ENCODE measurements at regions of chr3 and their contacts with region 1.

Region 1: DNA sequence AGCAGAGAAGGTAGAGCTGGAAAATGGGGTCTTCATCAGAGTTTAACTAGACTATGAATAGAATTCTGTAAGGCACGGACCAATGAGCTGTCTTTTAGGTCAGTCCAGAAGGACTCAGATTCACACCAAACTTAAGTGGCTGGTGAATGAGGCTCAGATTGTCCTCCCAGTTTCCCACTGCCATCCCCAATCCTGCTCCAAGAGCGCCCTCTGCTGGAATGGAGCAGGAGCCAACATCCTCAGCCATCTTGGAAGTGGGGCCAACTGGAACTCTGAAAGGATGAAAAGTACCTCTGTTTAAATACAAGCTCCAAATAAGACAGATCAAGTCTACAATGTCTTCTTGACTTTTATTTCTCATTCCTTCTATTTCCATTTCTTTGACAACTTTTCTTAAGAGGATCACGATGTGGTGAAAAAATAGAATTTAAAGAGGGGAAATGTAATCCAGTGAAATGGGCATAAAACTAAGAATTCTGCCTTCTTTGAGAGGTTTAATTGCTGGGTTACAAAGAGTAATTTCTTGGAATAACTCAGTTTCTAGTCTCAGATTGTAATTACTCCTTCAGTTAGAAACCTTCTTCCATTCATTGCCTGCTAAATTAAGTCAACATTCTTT is 217.1 kb upstream of the TPRG1 start:
- DNase-seq: peak; percentile 79
- ATAC-seq: peak; percentile 81
- H3K4me3 ChIP-seq: no peak overlapping the region
- H3K27ac ChIP-seq: no peak overlapping the region
- H3K4me1 ChIP-seq: peaks cover 17 to 22% of the 10 kb centered on the region in 2 experiments
- H3K27me3 ChIP-seq: no peaks in the 10 kb centered on the region
- CTCF ChIP-seq: peak in 2 of 3 experiments; percentile 88 to 97; a peak in 4 of 6 replicates
- POLR2A ChIP-seq: no peak
- RAD21 ChIP-seq: no peak

Region 2: GRCh38 chr3:187738331-187739093 is 1216.2 kb before region 1 on chr3:
- CTCF ChIA-PET with region 1: interaction called, 260 read pairs
- POLR2A ChIA-PET with region 1: interaction called, 15 read pairs
- RAD21 ChIA-PET with region 1: interaction called, 4 to 14 read pairs
- intact Hi-C with region 1: loop called (anchors 1 kb)
- DNase-seq: peak; percentile 83
- ATAC-seq: peak; percentile 70
- H3K4me3 ChIP-seq: peak overlapping the region; percentile 62 to 85
- H3K27ac ChIP-seq: peak overlapping the region; percentile 44
- H3K4me1 ChIP-seq: peaks cover 28 to 67% of the 10 kb centered on the region in 2 experiments
- H3K27me3 ChIP-seq: no peaks in the 10 kb centered on the region
- CTCF ChIP-seq: peak in 2 of 3 experiments; percentile 76 to 82; a peak in 4 of 6 replicates
- POLR2A ChIP-seq: no peak
- RAD21 ChIP-seq: no peak

Region 3: GRCh38 chr3:188164248-188164687 is 790.4 kb before region 1 on chr3:
- CTCF ChIA-PET with region 1: no interaction called
- POLR2A ChIA-PET with region 1: no interaction called
- RAD21 ChIA-PET with region 1: no interaction called
- intact Hi-C with region 1: loop called (anchors 10 kb)
- DNase-seq: peak; percentile 62
- ATAC-seq: peak; percentile 92
- H3K4me3 ChIP-seq: peak overlapping the region in 1 of 2 experiments; percentile 32; a peak in 2 of 4 replicates
- H3K27ac ChIP-seq: peak overlapping the region; percentile 65; the same call in 1 of the 2 replicates
- H3K4me1 ChIP-seq: peaks cover 26 to 40% of the 10 kb centered on the region in 2 experiments
- H3K27me3 ChIP-seq: no peaks in the 10 kb centered on the region
- CTCF ChIP-seq: no peak
- POLR2A ChIP-seq: no peak
- RAD21 ChIP-seq: peak; percentile 39

Region 4: GRCh38 chr3:188830893-188831292 is 123.8 kb before region 1 on chr3:
- CTCF ChIA-PET with region 1: interaction called, 13 read pairs
- POLR2A ChIA-PET with region 1: no interaction called
- RAD21 ChIA-PET with region 1: no interaction called
- intact Hi-C with region 1: loop called (anchors 2 kb)
- DNase-seq: no peak
- ATAC-seq: peak; percentile 64
- H3K4me3 ChIP-seq: no peak overlapping the region
- H3K27ac ChIP-seq: no peak overlapping the region
- H3K4me1 ChIP-seq: 0 out of 4 replicates have a peak, but pooled peaks cover 0 to 4% of the 10 kb centered on the region in 2 experiments
- H3K27me3 ChIP-seq: no peaks in the 10 kb centered on the region
- CTCF ChIP-seq: peak; percentile 40 to 55 (median 44); a peak in 5 of 6 replicates
- POLR2A ChIP-seq: no peak
- RAD21 ChIP-seq: peak; percentile 56

Region 5: DNA sequence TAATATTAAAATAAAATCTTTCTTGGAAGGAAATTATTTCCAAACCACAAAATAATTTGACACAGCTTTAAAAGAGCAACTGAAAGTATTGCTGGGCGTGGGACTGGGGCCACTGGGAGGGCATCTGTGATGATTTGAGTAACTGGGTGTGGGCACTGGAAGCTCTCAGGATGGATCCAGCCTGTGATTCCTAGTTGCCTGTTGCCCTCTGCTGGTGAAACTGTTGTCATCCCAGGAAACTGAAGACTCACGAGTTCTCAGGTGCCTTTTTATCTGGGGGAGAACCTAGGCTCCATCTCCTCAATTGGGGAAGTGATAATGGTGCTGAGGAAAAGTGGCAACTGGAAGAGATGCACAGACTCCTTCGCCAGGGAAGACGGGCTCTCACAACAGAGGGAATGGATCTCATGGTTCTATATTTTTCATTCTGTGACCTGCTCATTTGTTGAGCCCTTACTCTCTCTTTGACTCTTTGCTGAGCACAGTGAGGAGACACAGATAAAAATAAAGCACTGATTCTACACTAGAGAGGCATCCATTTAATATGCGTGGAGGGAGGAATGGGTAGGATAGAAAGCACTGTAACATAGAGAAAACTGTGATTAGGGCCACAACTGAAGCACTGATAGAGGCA is 278.6 kb after region 1 on chr3:
- CTCF ChIA-PET with region 1: interaction called, 8 read pairs
- POLR2A ChIA-PET with region 1: no interaction called
- RAD21 ChIA-PET with region 1: no interaction called
- intact Hi-C with region 1: loop called (anchors 2 kb)
- DNase-seq: peak; percentile 70
- ATAC-seq: peak; percentile 95
- H3K4me3 ChIP-seq: no peak overlapping the region
- H3K27ac ChIP-seq: no peak overlapping the region
- H3K4me1 ChIP-seq: no peaks in the 10 kb centered on the region
- H3K27me3 ChIP-seq: no peaks in the 10 kb centered on the region
- CTCF ChIP-seq: peak; percentile 90 to 96 (median 90)
- POLR2A ChIP-seq: no peak
- RAD21 ChIP-seq: peak; percentile 95

Region 6: DNA sequence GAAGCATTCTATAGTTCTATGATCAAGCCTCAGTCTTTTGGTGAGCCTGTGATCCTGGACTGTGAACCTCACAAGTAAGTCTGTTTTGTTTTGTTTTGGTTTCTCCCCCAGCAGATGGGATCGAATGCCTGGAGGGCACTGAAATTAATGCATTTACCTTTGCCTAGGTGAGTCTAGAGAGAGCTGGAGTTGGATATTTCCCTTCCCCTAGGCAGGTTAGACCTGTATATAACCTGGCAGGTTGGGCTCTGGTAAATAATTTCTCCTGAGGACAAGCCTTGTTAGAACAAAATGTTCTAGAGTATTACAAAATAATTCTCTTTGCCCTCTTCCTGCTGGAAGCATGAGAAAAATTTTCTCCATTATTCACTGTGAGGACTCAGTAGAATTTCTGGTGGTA is 428.9 kb after region 1 on chr3:
- CTCF ChIA-PET with region 1: no interaction called
- POLR2A ChIA-PET with region 1: no interaction called
- RAD21 ChIA-PET with region 1: no interaction called
- intact Hi-C with region 1: no loop called
- DNase-seq: no peak
- ATAC-seq: no peak
- H3K4me3 ChIP-seq: no peak overlapping the region
- H3K27ac ChIP-seq: no peak overlapping the region
- H3K4me1 ChIP-seq: peaks cover 0 to 4% of the 10 kb centered on the region in 2 experiments; a peak in 1 of 4 replicates
- H3K27me3 ChIP-seq: no peaks in the 10 kb centered on the region
- CTCF ChIP-seq: no peak
- POLR2A ChIP-seq: no peak
- RAD21 ChIP-seq: no peak

Region 7: DNA sequence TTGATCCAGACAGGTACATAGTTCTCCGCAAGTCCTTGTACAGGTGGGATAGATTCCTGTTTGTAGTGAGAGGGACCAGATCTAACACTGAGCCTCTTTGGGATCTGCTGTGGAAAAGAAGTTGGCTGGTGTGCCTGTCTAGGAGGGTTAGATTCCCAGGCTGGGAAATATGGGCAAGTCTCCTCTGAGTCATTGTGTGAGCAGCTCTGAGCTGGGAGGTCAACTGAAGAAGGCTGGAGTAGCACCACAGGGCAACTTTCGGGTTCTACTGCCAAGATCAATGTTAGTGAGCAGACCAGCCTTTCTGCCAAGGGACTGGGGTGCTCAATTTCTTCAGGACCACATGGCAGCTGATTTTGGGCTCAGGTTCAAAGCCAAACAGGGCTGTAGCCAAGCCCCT is 1334.1 kb after region 1 on chr3:
- CTCF ChIA-PET with region 1: no interaction called
- POLR2A ChIA-PET with region 1: no interaction called
- RAD21 ChIA-PET with region 1: no interaction called
- intact Hi-C with region 1: no loop called
- DNase-seq: no peak
- ATAC-seq: no peak
- H3K4me3 ChIP-seq: no peak overlapping the region
- H3K27ac ChIP-seq: no peak overlapping the region
- H3K4me1 ChIP-seq: no peaks in the 10 kb centered on the region
- H3K27me3 ChIP-seq: no peaks in the 10 kb centered on the region
- CTCF ChIP-seq: no peak
- POLR2A ChIP-seq: no peak
- RAD21 ChIP-seq: no peak